Endothelial cell of umbilical vein (primary cell): ENCODE measurements at regions of chr9 and their contacts with region 1.

Region 1: DNA sequence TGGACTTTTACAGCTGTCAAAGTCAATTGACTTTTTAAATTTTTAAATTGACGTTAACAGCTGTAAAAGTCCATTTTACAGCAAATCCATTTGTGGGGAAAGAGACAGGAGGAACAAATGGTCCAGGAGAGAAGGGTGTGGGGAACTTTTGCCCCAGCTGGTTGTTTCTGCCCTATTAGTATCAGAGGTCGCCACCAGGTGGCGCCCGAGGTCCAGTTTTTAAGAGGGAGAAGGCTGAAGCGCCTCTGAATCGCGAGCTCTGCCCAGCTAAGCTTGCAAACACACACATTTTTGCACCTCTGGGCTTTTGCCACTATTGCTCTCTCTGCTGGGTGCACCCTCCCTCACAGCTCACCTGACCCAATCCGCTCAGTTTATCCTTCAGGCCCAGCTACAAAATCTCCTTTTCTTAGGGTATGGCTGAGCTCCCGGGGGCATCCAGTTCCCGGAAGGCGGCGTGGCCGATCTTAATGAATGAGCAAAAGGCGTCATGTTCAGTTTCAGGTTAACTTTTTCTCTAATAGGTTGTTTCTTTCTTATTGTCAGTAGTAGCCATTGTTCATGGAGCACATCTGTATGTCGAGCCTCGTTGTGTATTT is 6.3 kb upstream of the TTLL11 start:
- DNase-seq: peak; percentile 60
- H3K4me3 ChIP-seq: no peak overlapping the region
- H3K27ac ChIP-seq: no peak overlapping the region
- H3K4me1 ChIP-seq: no peaks in the 10 kb centered on the region
- H3K27me3 ChIP-seq: peaks cover 0 to 2% of the 10 kb centered on the region in 2 experiments
- CTCF ChIP-seq: peak; percentile 77 to 85
- POLR2A ChIP-seq: no peak

Region 2: GRCh38 chr9:121963528-121963995 is 135.8 kb before region 1 on chr9:
- CTCF ChIA-PET with region 1: no interaction called
- POLR2A ChIA-PET with region 1: no interaction called
- dilution Hi-C with region 1: no loop called
- intact Hi-C with region 1: no loop called
- DNase-seq: peak; percentile 84
- H3K4me3 ChIP-seq: peak overlapping the region; percentile 11 to 68 (median 14)
- H3K27ac ChIP-seq: peak overlapping the region; percentile 92
- H3K4me1 ChIP-seq: peaks cover 29% of the 10 kb centered on the region
- H3K27me3 ChIP-seq: no peaks in the 10 kb centered on the region
- CTCF ChIP-seq: no peak
- POLR2A ChIP-seq: peak; percentile 71

Region 3: GRCh38 chr9:122116040-122116439 is 16.7 kb after region 1 on chr9:
- CTCF ChIA-PET with region 1: interaction called, 331 read pairs
- POLR2A ChIA-PET with region 1: no interaction called
- dilution Hi-C with region 1: no loop called
- intact Hi-C with region 1: no loop called
- DNase-seq: no peak
- H3K4me3 ChIP-seq: no peak overlapping the region
- H3K27ac ChIP-seq: no peak overlapping the region
- H3K4me1 ChIP-seq: no peaks in the 10 kb centered on the region
- H3K27me3 ChIP-seq: peaks cover 0 to 5% of the 10 kb centered on the region in 2 experiments
- CTCF ChIP-seq: no peak
- POLR2A ChIP-seq: no peak

Region 4: GRCh38 chr9:122144836-122145591 is 45.6 kb after region 1 on chr9:
- CTCF ChIA-PET with region 1: interaction called, 18 read pairs
- POLR2A ChIA-PET with region 1: no interaction called
- dilution Hi-C with region 1: no loop called
- intact Hi-C with region 1: no loop called
- DNase-seq: peak; percentile 60
- H3K4me3 ChIP-seq: no peak overlapping the region
- H3K27ac ChIP-seq: no peak overlapping the region
- H3K4me1 ChIP-seq: peaks cover 45% of the 10 kb centered on the region
- H3K27me3 ChIP-seq: no peaks in the 10 kb centered on the region
- CTCF ChIP-seq: peak; percentile 53 to 62
- POLR2A ChIP-seq: no peak

Region 5: GRCh38 chr9:122453677-122454135 is 354.3 kb after region 1 on chr9:
- CTCF ChIA-PET with region 1: interaction called, 47 read pairs
- POLR2A ChIA-PET with region 1: no interaction called
- dilution Hi-C with region 1: no loop called
- intact Hi-C with region 1: loop called (anchors 1 kb)
- DNase-seq: peak; percentile 27
- H3K4me3 ChIP-seq: no peak overlapping the region
- H3K27ac ChIP-seq: no peak overlapping the region
- H3K4me1 ChIP-seq: peaks cover 6% of the 10 kb centered on the region
- H3K27me3 ChIP-seq: peaks cover 2 to 7% of the 10 kb centered on the region in 2 experiments
- CTCF ChIP-seq: no peak
- POLR2A ChIP-seq: no peak

Region 6: DNA sequence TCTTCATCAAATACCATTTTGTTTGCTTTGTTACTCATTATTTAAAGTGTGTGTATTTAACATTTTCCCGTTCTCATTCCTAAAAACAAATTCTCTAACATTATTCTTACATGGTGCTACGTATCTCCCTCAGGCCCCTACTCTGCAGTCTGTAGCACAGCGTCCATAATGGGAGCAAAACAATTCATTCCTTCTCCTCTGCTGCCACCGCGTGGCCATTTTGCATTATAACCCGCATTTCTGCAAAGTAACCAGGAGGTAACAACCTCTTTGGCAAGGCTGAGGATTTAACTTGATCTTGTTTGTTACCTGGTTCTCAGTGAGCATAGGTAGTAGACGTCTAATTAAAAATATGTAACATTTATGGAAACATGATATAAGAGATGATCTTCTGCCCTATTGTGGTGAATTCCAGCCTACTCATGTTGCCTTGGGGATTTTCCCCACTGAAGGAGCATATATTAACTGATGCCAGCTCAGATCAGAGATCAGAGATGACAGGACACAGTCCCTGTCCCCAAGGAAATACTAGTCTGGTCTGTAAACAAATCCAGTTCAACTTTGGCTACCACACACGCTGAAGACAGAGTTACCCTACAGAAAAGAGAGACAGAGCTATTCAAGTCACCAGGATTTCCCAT is 711.1 kb after region 1 on chr9:
- CTCF ChIA-PET with region 1: interaction called, 32 read pairs
- POLR2A ChIA-PET with region 1: no interaction called
- dilution Hi-C with region 1: no loop called
- intact Hi-C with region 1: loop called (anchors 1 kb)
- DNase-seq: peak; percentile 87
- H3K4me3 ChIP-seq: no peak overlapping the region
- H3K27ac ChIP-seq: no peak overlapping the region
- H3K4me1 ChIP-seq: peaks cover 10% of the 10 kb centered on the region
- H3K27me3 ChIP-seq: no peaks in the 10 kb centered on the region
- CTCF ChIP-seq: peak; percentile 45 to 79
- POLR2A ChIP-seq: no peak